Natural killer cell (primary cell): ENCODE measurements at regions of chr1 and their contacts with region 1.

Region 1: DNA sequence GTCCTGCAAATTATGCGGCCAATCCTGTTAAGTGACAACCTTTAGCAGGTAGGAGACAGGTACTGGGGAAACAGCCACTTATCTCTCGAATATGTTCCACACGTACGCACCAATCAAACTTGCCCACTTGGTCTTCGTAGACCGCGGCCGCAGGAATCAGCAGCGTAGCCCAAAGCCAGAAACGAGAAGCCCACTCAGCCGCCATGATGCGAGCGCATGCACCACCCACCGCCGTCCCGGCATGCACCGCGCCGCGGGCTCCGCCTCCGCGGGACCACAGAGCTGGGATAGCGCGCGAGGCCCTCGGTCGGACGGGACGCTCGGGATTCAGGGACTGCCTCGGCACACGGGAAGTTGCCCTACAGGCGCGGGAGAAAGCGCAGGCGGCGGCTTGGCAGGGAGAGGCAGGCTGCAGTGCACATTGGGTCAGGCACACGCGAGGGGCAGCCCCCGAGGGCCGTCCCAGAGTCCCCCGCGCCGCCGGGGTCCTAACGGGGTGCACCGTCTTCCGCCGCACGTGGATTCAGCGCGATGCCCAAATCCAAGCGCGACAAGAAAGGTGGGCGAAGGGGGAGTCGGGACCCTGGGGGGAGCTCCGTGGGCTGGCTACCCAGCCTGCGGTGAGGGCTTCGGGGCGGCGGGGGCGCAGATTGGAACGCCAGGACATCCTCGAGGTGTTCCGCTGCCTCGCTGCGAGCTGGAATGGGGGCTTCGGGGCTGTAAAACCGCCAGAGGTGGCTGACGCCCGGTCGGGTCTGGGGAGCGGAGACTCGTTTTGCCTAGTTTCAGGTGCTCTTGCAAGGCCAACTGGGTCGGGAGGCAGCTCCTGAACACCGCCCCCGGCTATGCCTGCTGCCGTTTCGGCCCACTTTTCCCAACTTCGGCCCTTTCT is at the starts of genes EMC1 and MRTO4:
- DNase-seq: peak; percentile 92 to 93
- ATAC-seq: peak; percentile 93 to 96 (median 95)
- H3K4me3 ChIP-seq: peak within 1 kb of the TSS; percentile 75
- H3K4me3 Mint-ChIP-seq: peak within 1 kb of the TSS; percentile 95
- H3K27ac ChIP-seq: peak within 1 kb of the TSS; percentile 91
- H3K27ac Mint-ChIP-seq: peak within 1 kb of the TSS; percentile 90 to 95
- H3K4me1 ChIP-seq: peaks cover 26% of the 10 kb centered on the region
- H3K4me1 Mint-ChIP-seq: peaks cover 25 to 32% of the 10 kb centered on the region in 2 donors
- H3K27me3 ChIP-seq: no peaks in the 10 kb centered on the region
- H3K27me3 Mint-ChIP-seq: no peaks in the 10 kb centered on the region
- CTCF ChIP-seq: no peak
- total RNA-seq, gene EMC1: 30.7 to 36.0 (median 33.5) TPM
- total RNA-seq, gene MRTO4: 9.7 to 15.8 (median 13.5) TPM

Region 2: DNA sequence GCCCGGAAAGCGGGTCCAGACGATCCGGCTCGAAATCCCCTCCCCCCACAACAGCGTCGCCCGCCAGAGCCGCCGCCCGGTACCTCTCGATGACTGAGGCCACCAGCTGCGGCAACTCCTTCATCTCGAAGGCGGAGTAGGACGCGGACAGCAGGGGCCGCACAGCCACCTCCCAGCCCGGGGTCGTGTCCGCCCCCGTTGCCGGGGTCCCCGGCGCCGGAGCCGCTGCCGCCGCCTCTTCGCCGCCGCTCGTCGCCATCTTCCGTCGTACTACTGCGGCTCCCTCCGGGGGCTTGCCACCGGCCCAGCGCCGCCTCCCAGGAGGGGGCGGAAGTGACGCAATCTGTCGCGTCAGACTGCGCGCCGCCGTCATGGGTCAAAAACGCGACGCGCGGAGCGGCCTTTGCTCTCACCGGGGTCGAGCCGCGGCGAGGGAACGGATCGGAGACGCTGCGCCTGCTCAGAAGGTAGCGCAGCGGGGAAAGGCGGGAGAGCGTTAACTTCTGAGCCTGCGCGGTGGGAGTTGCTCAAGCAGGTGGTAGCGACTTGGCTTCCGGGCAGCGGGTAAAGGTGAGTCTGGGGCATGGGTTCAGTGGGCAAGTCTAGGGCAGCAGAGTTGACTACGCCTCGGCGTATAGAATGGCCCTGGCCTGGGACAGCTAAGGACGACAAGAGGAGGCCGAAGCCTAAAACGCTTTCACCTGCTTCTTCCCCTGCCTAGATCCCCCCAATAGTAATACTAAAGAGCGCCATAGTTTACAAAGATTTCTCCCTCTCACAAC is 41.4 kb before region 1 on chr1 and contains the start of gene UBR4:
- intact Hi-C with region 1: loop called (anchors 1 kb)
- DNase-seq: peak; percentile 98 to 99
- ATAC-seq: peak; percentile 85 to 97 (median 91)
- H3K4me3 ChIP-seq: peak within 1 kb of the TSS; percentile 84
- H3K4me3 Mint-ChIP-seq: peak within 1 kb of the TSS; percentile 97
- H3K27ac ChIP-seq: peak within 1 kb of the TSS; percentile 93
- H3K27ac Mint-ChIP-seq: peak within 1 kb of the TSS; percentile 99 to 100
- H3K4me1 ChIP-seq: peaks cover 8% of the 10 kb centered on the region
- H3K4me1 Mint-ChIP-seq: peaks cover 44 to 52% of the 10 kb centered on the region in 2 donors
- H3K27me3 ChIP-seq: no peaks in the 10 kb centered on the region
- H3K27me3 Mint-ChIP-seq: no peaks in the 10 kb centered on the region
- CTCF ChIP-seq: no peak
- total RNA-seq, gene UBR4: 139 to 178 (median 158) TPM

Region 3: GRCh38 chr1:19311959-19312781 is 60.6 kb after region 1 on chr1 and contains the starts of genes AKR7A2 and SLC66A1:
- intact Hi-C with region 1: loop called (anchors 2 kb)
- DNase-seq: peak; percentile 91 to 95
- ATAC-seq: peak; percentile 96 to 99 (median 98)
- H3K4me3 ChIP-seq: peak within 1 kb of the TSS; percentile 75
- H3K4me3 Mint-ChIP-seq: peak within 1 kb of the TSS; percentile 87
- H3K27ac ChIP-seq: peak within 1 kb of the TSS; percentile 45
- H3K27ac Mint-ChIP-seq: peak within 1 kb of the TSS; percentile 73 to 78
- H3K4me1 ChIP-seq: peaks cover 52% of the 10 kb centered on the region
- H3K4me1 Mint-ChIP-seq: peaks cover 31 to 43% of the 10 kb centered on the region in 2 donors
- H3K27me3 ChIP-seq: no peaks in the 10 kb centered on the region
- H3K27me3 Mint-ChIP-seq: no peaks in the 10 kb centered on the region
- CTCF ChIP-seq: no peak
- total RNA-seq, gene AKR7A2: 25.5 to 31.9 (median 28.9) TPM
- total RNA-seq, gene SLC66A1: 5.8 to 8.5 (median 7.6) TPM

Region 4: GRCh38 chr1:20047096-20047495 is 795.5 kb after region 1 on chr1:
- intact Hi-C with region 1: no loop called
- DNase-seq: no peak
- ATAC-seq: no peak
- H3K4me3 ChIP-seq: no peak overlapping the region
- H3K4me3 Mint-ChIP-seq: no peak overlapping the region
- H3K27ac ChIP-seq: no peak overlapping the region
- H3K27ac Mint-ChIP-seq: no peak overlapping the region
- H3K4me1 ChIP-seq: no peaks in the 10 kb centered on the region
- H3K4me1 Mint-ChIP-seq: no peaks in the 10 kb centered on the region
- H3K27me3 ChIP-seq: peaks cover 2% of the 10 kb centered on the region
- H3K27me3 Mint-ChIP-seq: peaks cover 4 to 11% of the 10 kb centered on the region in 2 donors
- CTCF ChIP-seq: no peak

Region 5: GRCh38 chr1:21050031-21050430 is 1798.5 kb after region 1 on chr1:
- intact Hi-C with region 1: no loop called
- DNase-seq: no peak
- ATAC-seq: no peak
- H3K4me3 ChIP-seq: no peak overlapping the region
- H3K4me3 Mint-ChIP-seq: no peak overlapping the region
- H3K27ac ChIP-seq: no peak overlapping the region
- H3K27ac Mint-ChIP-seq: no peak overlapping the region
- H3K4me1 ChIP-seq: no peaks in the 10 kb centered on the region
- H3K4me1 Mint-ChIP-seq: peaks cover 12 to 14% of the 10 kb centered on the region in 2 donors
- H3K27me3 ChIP-seq: no peaks in the 10 kb centered on the region
- H3K27me3 Mint-ChIP-seq: no peaks in the 10 kb centered on the region
- CTCF ChIP-seq: no peak